ENCODE measurements at regions of chr14 and their contacts with region 1.

Region 1: GRCh38 chr14:20327005-20327869 is 5.8 kb downstream of the CCNB1IP1 start:
- DNase-seq: peak in 3 of 9 experiments; percentile 35 to 83 (median 76)
- ATAC-seq: peak; percentile 62
- H3K4me3 ChIP-seq: no peak overlapping the region
- H3K4me3 Mint-ChIP-seq: no peak overlapping the region
- H3K27ac ChIP-seq: no peak overlapping the region
- H3K27ac Mint-ChIP-seq: peak overlapping the region; percentile 62
- H3K4me1 ChIP-seq: peaks cover 6% of the 10 kb centered on the region
- H3K4me1 Mint-ChIP-seq: peaks cover 26% of the 10 kb centered on the region
- H3K27me3 ChIP-seq: no peaks in the 10 kb centered on the region
- H3K27me3 Mint-ChIP-seq: no peaks in the 10 kb centered on the region
- CTCF ChIP-seq: peak; percentile 98

Region 2: GRCh38 chr14:20219033-20219432 is 108.2 kb before region 1 on chr14:
- CTCF ChIA-PET with region 1: no interaction called
- POLR2A ChIA-PET with region 1: no interaction called
- intact Hi-C with region 1: no loop called
- DNase-seq: no peak
- ATAC-seq: no peak
- H3K4me3 ChIP-seq: no peak overlapping the region
- H3K4me3 Mint-ChIP-seq: no peak overlapping the region
- H3K27ac ChIP-seq: no peak overlapping the region
- H3K27ac Mint-ChIP-seq: no peak overlapping the region
- H3K4me1 ChIP-seq: no peaks in the 10 kb centered on the region
- H3K4me1 Mint-ChIP-seq: no peaks in the 10 kb centered on the region
- H3K27me3 ChIP-seq: no peaks in the 10 kb centered on the region
- H3K27me3 Mint-ChIP-seq: peaks cover 12% of the 10 kb centered on the region
- CTCF ChIP-seq: no peak

Region 3: GRCh38 chr14:20274062-20274461 is 53.2 kb before region 1 on chr14:
- CTCF ChIA-PET with region 1: no interaction called
- POLR2A ChIA-PET with region 1: no interaction called
- intact Hi-C with region 1: no loop called
- DNase-seq: no peak
- ATAC-seq: no peak
- H3K4me3 ChIP-seq: no peak overlapping the region
- H3K4me3 Mint-ChIP-seq: no peak overlapping the region
- H3K27ac ChIP-seq: no peak overlapping the region
- H3K27ac Mint-ChIP-seq: no peak overlapping the region
- H3K4me1 ChIP-seq: peaks cover 7% of the 10 kb centered on the region
- H3K4me1 Mint-ChIP-seq: peaks cover 9% of the 10 kb centered on the region
- H3K27me3 ChIP-seq: no peaks in the 10 kb centered on the region
- H3K27me3 Mint-ChIP-seq: no peaks in the 10 kb centered on the region
- CTCF ChIP-seq: no peak

Region 4: GRCh38 chr14:20343092-20343861 is 16.0 kb after region 1 on chr14 and contains the start of gene PARP2:
- CTCF ChIA-PET with region 1: interaction called, 102 read pairs
- POLR2A ChIA-PET with region 1: interaction called, 23 read pairs
- intact Hi-C with region 1: loop called (anchors 1 to 2 kb)
- DNase-seq: peak; percentile 70 to 97 (median 84)
- ATAC-seq: peak; percentile 81
- H3K4me3 ChIP-seq: peak within 1 kb of the TSS; percentile 96 to 98
- H3K4me3 Mint-ChIP-seq: peak within 1 kb of the TSS; percentile 100
- H3K27ac ChIP-seq: peak within 1 kb of the TSS; percentile 79 to 93
- H3K27ac Mint-ChIP-seq: peak within 1 kb of the TSS; percentile 97
- H3K4me1 ChIP-seq: peaks cover 8% of the 10 kb centered on the region
- H3K4me1 Mint-ChIP-seq: peaks cover 18% of the 10 kb centered on the region
- H3K27me3 ChIP-seq: peaks cover 0 to 3% of the 10 kb centered on the region in 2 experiments
- H3K27me3 Mint-ChIP-seq: no peaks in the 10 kb centered on the region
- CTCF ChIP-seq: peak; percentile 14
- total RNA-seq, gene PARP2: 15.9 to 16.5 TPM

Region 5: GRCh38 chr14:20356422-20356821 is 29.2 kb after region 1 on chr14:
- CTCF ChIA-PET with region 1: interaction called, 4 read pairs
- POLR2A ChIA-PET with region 1: no interaction called
- intact Hi-C with region 1: loop called (anchors 1 to 5 kb)
- DNase-seq: no peak
- ATAC-seq: no peak
- H3K4me3 ChIP-seq: no peak overlapping the region
- H3K4me3 Mint-ChIP-seq: no peak overlapping the region
- H3K27ac ChIP-seq: no peak overlapping the region
- H3K27ac Mint-ChIP-seq: peak overlapping the region; percentile 23
- H3K4me1 ChIP-seq: no peaks in the 10 kb centered on the region
- H3K4me1 Mint-ChIP-seq: no peaks in the 10 kb centered on the region
- H3K27me3 ChIP-seq: no peaks in the 10 kb centered on the region
- H3K27me3 Mint-ChIP-seq: no peaks in the 10 kb centered on the region
- CTCF ChIP-seq: no peak

Region 6: DNA sequence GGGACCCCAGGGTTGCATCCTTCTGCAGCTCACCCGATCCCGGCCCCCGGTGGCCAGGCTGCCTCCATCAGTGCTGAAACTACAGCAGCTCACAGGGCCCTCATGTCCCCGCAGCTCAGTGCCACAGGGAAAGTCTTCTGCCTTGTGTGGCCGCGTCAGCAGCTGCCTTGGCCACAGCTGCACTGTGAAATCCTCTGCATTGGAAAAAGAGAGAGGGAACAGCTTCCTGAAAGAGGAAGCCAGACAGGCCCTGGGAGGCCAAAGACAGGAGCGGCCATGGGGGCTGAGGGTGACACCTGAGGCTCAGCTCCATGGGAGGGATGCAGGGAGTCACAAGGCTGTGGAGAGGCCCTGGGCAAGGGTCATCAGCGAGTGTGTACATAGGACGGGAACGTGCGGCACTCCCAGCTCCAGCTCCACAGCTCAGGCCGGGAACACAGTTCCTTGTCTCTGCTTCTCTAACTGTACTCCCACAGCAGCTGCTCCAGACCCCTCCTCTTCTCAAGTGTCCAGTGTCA is 48.9 kb after region 1 on chr14:
- CTCF ChIA-PET with region 1: no interaction called
- POLR2A ChIA-PET with region 1: no interaction called
- intact Hi-C with region 1: no loop called
- DNase-seq: no peak
- ATAC-seq: no peak
- H3K4me3 ChIP-seq: no peak overlapping the region
- H3K4me3 Mint-ChIP-seq: no peak overlapping the region
- H3K27ac ChIP-seq: no peak overlapping the region
- H3K27ac Mint-ChIP-seq: no peak overlapping the region
- H3K4me1 ChIP-seq: no peaks in the 10 kb centered on the region
- H3K4me1 Mint-ChIP-seq: no peaks in the 10 kb centered on the region
- H3K27me3 ChIP-seq: no peaks in the 10 kb centered on the region
- H3K27me3 Mint-ChIP-seq: no peaks in the 10 kb centered on the region
- CTCF ChIP-seq: no peak

Region 7: GRCh38 chr14:20539906-20540305 is 212.7 kb after region 1 on chr14:
- CTCF ChIA-PET with region 1: no interaction called
- POLR2A ChIA-PET with region 1: no interaction called
- intact Hi-C with region 1: no loop called
- DNase-seq: no peak
- ATAC-seq: no peak
- H3K4me3 ChIP-seq: no peak overlapping the region
- H3K4me3 Mint-ChIP-seq: no peak overlapping the region
- H3K27ac ChIP-seq: no peak overlapping the region
- H3K27ac Mint-ChIP-seq: no peak overlapping the region
- H3K4me1 ChIP-seq: no peaks in the 10 kb centered on the region
- H3K4me1 Mint-ChIP-seq: no peaks in the 10 kb centered on the region
- H3K27me3 ChIP-seq: no peaks in the 10 kb centered on the region
- H3K27me3 Mint-ChIP-seq: peaks cover 2% of the 10 kb centered on the region
- CTCF ChIP-seq: no peak

Region 8: DNA sequence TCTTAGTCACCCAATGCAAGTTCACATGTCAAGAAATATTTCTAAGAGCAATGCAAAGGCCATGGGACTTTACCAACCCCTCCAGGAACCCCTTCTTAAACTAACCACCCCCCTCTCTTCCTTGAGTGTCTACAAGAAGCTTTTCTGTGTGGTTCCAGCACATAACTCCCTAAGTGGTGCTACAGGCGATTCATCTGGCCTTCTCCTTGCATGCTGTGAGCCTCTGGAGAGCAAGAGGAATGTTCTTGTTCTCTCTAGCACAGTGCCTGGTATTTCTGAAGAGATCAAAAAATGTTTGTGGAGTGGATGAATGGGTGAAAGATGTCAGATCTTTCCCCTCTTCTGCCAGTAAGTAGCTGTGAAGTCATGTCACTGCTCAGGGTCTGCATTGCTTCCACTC is 269.9 kb after region 1 on chr14:
- CTCF ChIA-PET with region 1: interaction called, 13 read pairs
- POLR2A ChIA-PET with region 1: no interaction called
- intact Hi-C with region 1: no loop called
- DNase-seq: no peak
- ATAC-seq: no peak
- H3K4me3 ChIP-seq: no peak overlapping the region
- H3K4me3 Mint-ChIP-seq: no peak overlapping the region
- H3K27ac ChIP-seq: no peak overlapping the region
- H3K27ac Mint-ChIP-seq: no peak overlapping the region
- H3K4me1 ChIP-seq: no peaks in the 10 kb centered on the region
- H3K4me1 Mint-ChIP-seq: peaks cover 1% of the 10 kb centered on the region
- H3K27me3 ChIP-seq: no peaks in the 10 kb centered on the region
- H3K27me3 Mint-ChIP-seq: peaks cover 5% of the 10 kb centered on the region
- CTCF ChIP-seq: no peak

Region 9: DNA sequence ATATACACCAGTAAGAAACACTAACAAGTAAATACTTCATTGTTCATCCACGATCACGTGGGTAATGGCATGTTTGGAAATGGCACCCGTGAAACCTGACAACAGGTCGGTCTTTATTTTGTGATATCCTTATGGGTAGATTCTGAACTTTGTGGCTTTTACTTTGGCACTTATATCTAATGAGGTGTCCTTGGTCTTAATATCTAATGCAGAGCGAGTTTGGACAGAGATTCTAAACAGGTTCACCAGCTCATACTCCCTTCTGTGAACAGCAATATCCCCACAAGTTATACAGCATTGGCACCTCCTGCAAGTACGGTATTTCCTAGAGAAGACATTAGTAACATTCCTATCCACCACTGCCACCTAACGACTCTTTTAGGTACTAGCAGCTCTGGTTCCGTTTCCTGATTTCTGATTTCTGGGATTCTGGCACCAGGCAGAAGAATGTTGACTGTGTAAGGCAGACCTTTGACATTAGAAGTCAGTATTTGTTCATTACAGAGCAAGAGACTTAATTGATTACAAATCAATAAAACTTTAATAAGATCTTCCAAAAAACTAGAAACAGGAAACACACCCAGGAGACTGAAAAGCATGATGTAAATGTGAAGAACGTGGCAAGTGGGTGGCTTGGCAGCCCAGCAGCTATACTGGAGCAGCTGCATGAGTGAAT is 363.7 kb after region 1 on chr14:
- CTCF ChIA-PET with region 1: interaction called, 60 read pairs
- POLR2A ChIA-PET with region 1: interaction called, 4 read pairs
- intact Hi-C with region 1: loop called (anchors 1 kb)
- DNase-seq: peak in 8 of 9 experiments; percentile 4 to 83 (median 38)
- ATAC-seq: peak; percentile 99
- H3K4me3 ChIP-seq: no peak overlapping the region
- H3K4me3 Mint-ChIP-seq: no peak overlapping the region
- H3K27ac ChIP-seq: no peak overlapping the region
- H3K27ac Mint-ChIP-seq: no peak overlapping the region
- H3K4me1 ChIP-seq: no peaks in the 10 kb centered on the region
- H3K4me1 Mint-ChIP-seq: peaks cover 3% of the 10 kb centered on the region
- H3K27me3 ChIP-seq: no peaks in the 10 kb centered on the region
- H3K27me3 Mint-ChIP-seq: no peaks in the 10 kb centered on the region
- CTCF ChIP-seq: peak; percentile 98

Measured in CD8-positive, alpha-beta T cell (primary cell).